ENCODE measurements at regions of chr13 and their contacts with region 1.

Region 1: GRCh38 chr13:112833551-112834257 is 135.3 kb upstream of the MCF2L start:
- DNase-seq: peak; percentile 76

Region 2: GRCh38 chr13:112767506-112768471 is 65.9 kb before region 1 on chr13:
- intact Hi-C with region 1: loop called in 1 of 2 experiments (anchors 2 kb)
- DNase-seq: peak; percentile 84

Region 3: GRCh38 chr13:112902101-112902651 is 68.5 kb after region 1 on chr13:
- intact Hi-C with region 1: no loop called
- DNase-seq: no peak

Region 4: DNA sequence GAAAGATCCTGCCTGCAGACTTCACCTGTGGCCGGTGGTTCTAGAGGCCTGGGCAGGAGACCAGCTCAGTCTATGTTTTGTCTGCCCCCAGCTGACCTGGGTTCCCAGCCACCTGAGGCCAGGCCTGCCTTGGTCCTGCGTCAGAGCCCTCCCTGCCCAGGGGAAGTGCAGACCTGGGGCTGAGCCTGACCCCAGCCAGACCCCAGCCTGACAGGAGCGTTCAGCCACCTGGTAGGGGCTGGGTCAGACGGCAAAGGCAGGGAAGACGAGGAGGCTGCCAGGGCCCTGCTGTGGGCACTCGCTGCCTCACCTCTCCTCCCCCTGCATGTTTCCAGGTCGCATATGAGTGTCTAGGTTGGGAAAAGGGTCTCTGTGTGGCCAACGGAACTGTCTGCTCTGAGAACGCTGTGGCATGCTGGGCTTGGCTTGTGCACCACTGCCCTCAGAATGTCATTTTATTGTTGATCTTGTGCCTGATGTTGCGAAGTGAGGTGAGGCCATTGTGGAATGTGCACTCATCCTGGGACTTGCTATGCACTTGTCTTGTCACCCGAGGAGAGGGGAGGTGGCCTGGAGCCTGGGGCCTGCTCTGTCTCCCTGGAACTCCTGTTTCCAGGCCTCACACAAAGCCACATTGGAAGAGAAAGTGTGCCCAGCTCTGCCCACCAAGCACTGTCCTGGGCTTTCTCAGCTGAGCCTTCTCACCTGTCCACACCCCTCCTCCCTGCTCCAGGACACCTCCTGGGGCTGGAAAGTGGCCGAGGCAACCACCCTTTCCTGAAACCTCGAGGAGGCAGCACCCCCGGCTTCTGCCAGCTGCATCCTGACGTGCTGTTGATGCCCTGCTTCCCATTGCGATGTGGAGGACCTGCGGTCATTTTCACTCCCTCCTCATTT is 120.1 kb after region 1 on chr13:
- intact Hi-C with region 1: no loop called
- DNase-seq: peak; percentile 76

Measured in posterior vena cava (tissue), 2 donors.